IMR-90 (cell line): ENCODE measurements at regions of chr7 and their contacts with region 1.

Region 1: GRCh38 chr7:112206238-112207044 is at the starts of genes DOCK4 and ZNF277:
- DNase-seq: peak; percentile 99
- ATAC-seq: peak; percentile 91
- H3K4me3 ChIP-seq: peak within 1 kb of the TSS; percentile 71
- H3K27ac ChIP-seq: peak within 1 kb of the TSS; percentile 62
- H3K4me1 ChIP-seq: peaks cover 3% of the 10 kb centered on the region; the same call in 1 of the 2 replicates
- H3K27me3 ChIP-seq: no peaks in the 10 kb centered on the region
- CTCF ChIP-seq: no peak
- POLR2A ChIP-seq: peak; percentile 87
- RAD21 ChIP-seq: peak; percentile 23; the same call in 1 of the 2 replicates
- total RNA-seq, gene DOCK4: 12.2 and 14.2 TPM in 2 replicates
- total RNA-seq, gene ZNF277: 21.3 and 45.0 TPM in 2 replicates

Region 2: GRCh38 chr7:111763221-111763801 is 443.1 kb before region 1 on chr7:
- CTCF ChIA-PET with region 1: no interaction called
- POLR2A ChIA-PET with region 1: no interaction called
- dilution Hi-C with region 1: no loop called
- in situ Hi-C with region 1: loop called (anchors 25 kb)
- intact Hi-C with region 1: loop called (anchors 1 kb)
- DNase-seq: peak; percentile 71
- ATAC-seq: peak; percentile 92
- H3K4me3 ChIP-seq: no peak overlapping the region
- H3K27ac ChIP-seq: no peak overlapping the region
- H3K4me1 ChIP-seq: peaks cover 2% of the 10 kb centered on the region; the same call in 1 of the 2 replicates
- H3K27me3 ChIP-seq: no peaks in the 10 kb centered on the region
- CTCF ChIP-seq: peak; percentile 77
- POLR2A ChIP-seq: no peak
- RAD21 ChIP-seq: peak; percentile 78

Region 3: GRCh38 chr7:111987115-111987826 is 219.2 kb before region 1 on chr7:
- CTCF ChIA-PET with region 1: no interaction called
- POLR2A ChIA-PET with region 1: no interaction called
- dilution Hi-C with region 1: no loop called
- in situ Hi-C with region 1: no loop called
- intact Hi-C with region 1: loop called (anchors 10 kb)
- DNase-seq: peak; percentile 71
- ATAC-seq: peak; percentile 61
- H3K4me3 ChIP-seq: no peak overlapping the region
- H3K27ac ChIP-seq: no peak overlapping the region
- H3K4me1 ChIP-seq: peaks cover 3% of the 10 kb centered on the region; the same call in 1 of the 2 replicates
- H3K27me3 ChIP-seq: no peaks in the 10 kb centered on the region
- CTCF ChIP-seq: no peak
- POLR2A ChIP-seq: no peak
- RAD21 ChIP-seq: no peak

Region 4: DNA sequence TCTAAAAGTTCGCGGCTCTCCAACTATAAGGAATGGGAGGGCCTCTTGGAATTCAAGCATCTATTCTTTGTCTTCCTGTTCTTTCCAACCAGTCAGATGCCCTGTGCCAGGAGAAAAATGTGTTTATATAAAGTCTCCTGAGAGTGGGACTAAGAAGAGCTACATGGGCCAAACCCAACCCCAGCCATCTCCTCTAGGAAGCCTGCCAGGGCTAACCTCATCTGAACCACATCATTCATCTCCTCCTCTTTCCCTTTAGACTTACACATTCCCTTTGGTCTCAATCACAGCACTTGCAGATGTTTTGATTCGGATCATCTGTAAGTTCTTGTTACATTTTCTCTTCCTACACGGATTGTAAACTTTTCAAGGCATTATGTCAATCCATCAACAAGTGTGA is 62.9 kb before region 1 on chr7:
- CTCF ChIA-PET with region 1: no interaction called
- POLR2A ChIA-PET with region 1: no interaction called
- dilution Hi-C with region 1: no loop called
- in situ Hi-C with region 1: no loop called
- intact Hi-C with region 1: loop called (anchors 5 kb)
- DNase-seq: peak; percentile 94
- ATAC-seq: peak; percentile 89
- H3K4me3 ChIP-seq: no peak overlapping the region
- H3K27ac ChIP-seq: peak overlapping the region; percentile 40; the same call in 1 of the 2 replicates
- H3K4me1 ChIP-seq: peaks cover 11% of the 10 kb centered on the region
- H3K27me3 ChIP-seq: no peaks in the 10 kb centered on the region
- CTCF ChIP-seq: no peak
- POLR2A ChIP-seq: no peak
- RAD21 ChIP-seq: no peak

Region 5: DNA sequence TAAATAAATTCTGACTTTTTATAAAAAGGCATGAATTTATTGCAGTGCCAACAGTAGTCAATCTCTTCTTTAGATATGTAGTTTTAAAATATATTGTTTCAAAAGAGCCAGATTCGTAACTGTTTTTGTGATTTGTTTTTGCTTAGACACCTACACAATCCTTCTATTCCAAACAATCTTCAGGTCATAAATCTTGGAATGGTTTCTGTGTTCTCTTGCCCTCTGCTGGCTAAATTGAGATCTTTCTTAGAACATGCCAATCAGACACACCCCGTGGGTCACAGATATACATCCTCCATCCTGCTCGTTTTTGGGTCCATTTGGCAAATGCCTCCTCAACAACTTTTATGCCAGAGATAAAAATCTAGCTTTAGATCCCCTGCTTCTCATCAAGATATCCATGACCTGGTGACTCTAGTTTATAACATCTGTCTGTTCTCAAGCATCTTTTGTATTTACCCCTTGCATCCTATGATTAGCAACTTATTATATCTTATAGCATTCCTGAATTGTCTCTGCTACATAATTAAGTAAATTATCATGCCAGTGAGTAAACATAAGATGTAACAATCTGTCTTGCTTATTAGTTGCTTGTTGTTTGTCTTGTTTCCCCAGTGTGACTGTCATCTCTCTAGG is 208.5 kb after region 1 on chr7:
- CTCF ChIA-PET with region 1: no interaction called
- POLR2A ChIA-PET with region 1: no interaction called
- dilution Hi-C with region 1: no loop called
- in situ Hi-C with region 1: loop called (anchors 10 kb)
- intact Hi-C with region 1: loop called (anchors 5 kb)
- DNase-seq: peak; percentile 38
- ATAC-seq: peak; percentile 72
- H3K4me3 ChIP-seq: no peak overlapping the region
- H3K27ac ChIP-seq: no peak overlapping the region
- H3K4me1 ChIP-seq: peaks cover 3% of the 10 kb centered on the region; the same call in 1 of the 2 replicates
- H3K27me3 ChIP-seq: peaks cover 8% of the 10 kb centered on the region
- CTCF ChIP-seq: peak; percentile 57
- POLR2A ChIP-seq: no peak
- RAD21 ChIP-seq: peak; percentile 60